Activated T-helper 1 cell treated with anti-CD3 and anti-CD28 coated beads, Interleukin-12 subunit alpha, Interleukin-12 subunit beta, Interleukin-2, Interleukin-4 antibody, amounts not matched to agents 30 ng/mL and 10 ng/mL and 1 ng/mL, durations not matched to agents 14 hours and 24 hours and 36 hours (primary cell): ENCODE measurements at regions of chrX and their contacts with region 1.

Region 1: GRCh38 chrX:120250522-120251271 is at the start of gene ZBTB33:
- DNase-seq: peak; percentile 79
- H3K4me3 Mint-ChIP-seq: peak within 1 kb of the TSS; percentile 96
- H3K27ac Mint-ChIP-seq: peak within 1 kb of the TSS; percentile 96
- H3K4me1 Mint-ChIP-seq: peaks cover 17% of the 10 kb centered on the region
- H3K27me3 Mint-ChIP-seq: no peaks in the 10 kb centered on the region
- total RNA-seq, gene ZBTB33: 13.0 and 13.4 TPM in 2 replicates

Region 2: DNA sequence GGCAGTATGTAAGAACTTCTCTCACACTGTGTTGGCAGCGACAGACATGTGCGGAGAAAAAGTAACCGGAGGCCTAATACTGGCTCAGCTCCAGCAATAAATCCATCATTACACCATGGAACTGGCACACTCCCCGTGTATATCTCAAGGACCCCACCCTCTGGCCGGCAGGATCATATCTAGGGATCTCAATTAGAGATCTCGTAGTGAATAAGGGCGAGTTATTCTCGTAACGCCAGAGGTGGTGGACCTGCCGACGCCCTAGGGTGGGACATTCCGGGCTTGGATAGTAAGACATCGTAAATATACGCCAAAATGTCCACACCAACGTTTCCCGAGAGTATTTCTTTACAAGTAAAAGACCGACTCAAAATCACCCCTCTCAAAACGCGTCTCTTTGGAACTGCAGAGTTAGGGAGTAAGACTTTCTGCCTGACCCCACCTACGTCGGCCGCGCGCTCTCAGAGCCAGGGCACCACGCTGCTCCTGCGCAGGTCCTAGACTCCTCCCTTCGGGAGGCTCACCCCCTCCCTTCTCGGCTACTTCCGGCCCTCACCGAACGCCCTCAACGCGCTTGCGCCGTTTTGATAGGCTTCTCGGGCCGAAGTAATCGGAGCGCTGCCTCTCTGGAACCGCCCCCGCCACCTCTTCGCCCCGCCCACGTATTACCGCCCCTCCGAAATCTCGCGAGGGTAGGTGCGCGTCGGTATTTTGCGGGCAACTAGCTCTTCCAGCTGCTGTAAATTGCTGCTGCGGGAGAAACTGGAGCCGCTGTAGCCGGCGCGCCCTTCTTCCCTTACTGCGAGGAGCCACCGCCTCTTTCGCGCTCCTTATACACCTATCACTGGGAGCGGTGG is 1905.1 kb before region 1 on chrX and contains the start of gene WDR44:
- intact Hi-C with region 1: loop called (anchors 5 kb)
- DNase-seq: peak; percentile 89
- H3K4me3 Mint-ChIP-seq: peak within 1 kb of the TSS; percentile 99
- H3K27ac Mint-ChIP-seq: peak within 1 kb of the TSS; percentile 99
- H3K4me1 Mint-ChIP-seq: peaks cover 39% of the 10 kb centered on the region
- H3K27me3 Mint-ChIP-seq: peaks cover 3% of the 10 kb centered on the region
- total RNA-seq, gene WDR44: 10.0 and 11.3 TPM in 2 replicates

Region 3: DNA sequence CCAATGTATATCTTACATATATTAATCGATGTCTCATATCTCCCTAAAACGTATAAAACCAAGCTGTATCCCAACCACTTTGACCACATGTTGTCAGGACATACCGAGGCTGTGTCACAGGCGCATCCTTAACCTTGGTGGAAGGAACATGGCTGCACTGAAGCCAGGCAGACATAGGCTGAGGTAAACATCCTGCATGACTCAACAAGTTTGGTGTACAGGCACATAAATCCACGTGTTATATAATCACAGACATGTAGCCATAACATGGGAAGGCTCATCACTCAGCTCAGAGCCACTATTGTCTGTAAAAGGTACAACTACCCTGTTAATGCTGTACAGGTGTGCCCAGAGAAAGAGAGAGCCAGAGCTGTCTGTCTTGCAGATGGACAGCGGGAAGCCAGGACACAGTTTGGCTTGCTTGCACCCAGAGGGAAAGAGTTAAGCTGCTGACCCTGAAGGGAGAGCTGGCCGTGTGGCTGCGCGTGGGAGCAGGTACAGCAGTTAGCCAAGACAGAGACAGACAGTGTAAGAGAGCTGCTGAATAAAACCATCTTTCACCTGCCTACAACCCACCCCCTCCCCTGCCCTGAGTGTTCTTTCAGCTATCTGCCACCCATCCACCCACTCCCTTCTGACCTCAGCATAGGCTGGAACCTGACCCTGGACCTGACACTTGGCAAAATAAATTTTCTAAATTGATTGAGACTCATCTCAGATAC is 22.3 kb before region 1 on chrX:
- intact Hi-C with region 1: no loop called
- DNase-seq: no peak
- H3K4me3 Mint-ChIP-seq: no peak overlapping the region
- H3K27ac Mint-ChIP-seq: no peak overlapping the region
- H3K4me1 Mint-ChIP-seq: peaks cover 6% of the 10 kb centered on the region
- H3K27me3 Mint-ChIP-seq: no peaks in the 10 kb centered on the region

Region 4: DNA sequence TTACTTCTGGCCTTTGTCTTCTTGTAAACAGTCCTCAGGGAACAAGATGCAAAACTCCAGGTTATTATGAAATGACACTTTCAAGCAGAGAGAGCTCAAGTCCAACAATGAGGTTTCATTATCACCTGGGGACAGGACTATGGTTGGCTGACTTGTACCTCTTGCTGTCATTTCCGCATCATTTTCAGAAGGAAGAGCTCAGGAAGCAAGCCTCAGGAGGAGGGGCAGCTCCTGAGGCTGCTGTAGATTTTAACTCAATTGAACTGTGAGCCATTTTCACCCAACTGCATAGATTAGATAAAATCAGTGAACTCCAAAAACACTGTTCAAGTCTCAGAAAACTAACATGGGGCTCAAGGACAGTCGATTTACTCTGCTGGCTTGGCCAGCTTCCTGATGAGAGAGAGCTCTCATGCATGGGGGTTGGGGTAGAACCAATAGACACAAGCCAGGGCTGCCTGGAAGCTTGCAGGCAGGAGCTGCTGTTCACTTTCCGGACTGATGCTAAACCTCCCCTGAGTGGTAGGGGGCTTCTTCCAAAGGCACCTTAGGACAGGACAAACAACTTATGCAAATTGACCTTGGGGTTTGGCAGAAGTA is 36.9 kb after region 1 on chrX:
- intact Hi-C with region 1: no loop called
- DNase-seq: no peak
- H3K4me3 Mint-ChIP-seq: no peak overlapping the region
- H3K27ac Mint-ChIP-seq: no peak overlapping the region
- H3K4me1 Mint-ChIP-seq: no peaks in the 10 kb centered on the region
- H3K27me3 Mint-ChIP-seq: peaks cover 4% of the 10 kb centered on the region

Region 5: DNA sequence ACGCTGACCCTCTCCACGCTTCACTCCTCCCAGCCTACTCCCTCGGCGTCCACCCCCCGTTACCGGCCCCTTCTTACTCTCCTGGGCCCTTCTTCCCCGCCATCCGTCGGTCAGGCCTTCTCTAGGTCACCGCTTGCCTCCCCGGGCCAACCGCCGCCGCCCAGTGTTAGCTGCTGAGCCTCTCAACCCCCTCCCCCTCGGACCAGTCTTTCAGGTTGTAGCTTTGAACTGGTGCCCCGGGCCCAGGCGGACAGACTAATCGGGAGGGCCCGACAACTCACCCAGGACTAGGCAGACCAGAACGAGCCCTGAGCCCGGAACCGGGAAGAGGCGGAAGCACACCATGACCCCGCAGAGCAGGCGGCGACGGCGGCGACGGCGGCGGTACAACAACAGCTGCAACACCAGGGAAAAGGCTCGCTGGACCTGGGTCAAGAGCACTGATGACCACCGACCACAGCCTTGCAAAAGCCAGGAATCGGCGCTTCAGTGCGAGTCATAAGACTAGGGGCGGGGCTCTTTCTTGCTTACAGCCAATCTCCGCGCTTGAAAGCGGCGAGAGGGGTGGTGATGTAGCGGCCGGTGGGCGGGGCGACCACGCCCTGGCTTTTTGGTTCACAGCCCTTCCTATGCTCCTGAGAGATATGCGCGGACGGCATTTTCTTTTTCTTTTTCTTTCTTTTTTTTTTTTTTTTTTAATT is 218.3 kb after region 1 on chrX and contains the start of gene LAMP2:
- intact Hi-C with region 1: loop called (anchors 1 kb)
- DNase-seq: peak; percentile 75
- H3K4me3 Mint-ChIP-seq: peak within 1 kb of the TSS; percentile 90
- H3K27ac Mint-ChIP-seq: peak within 1 kb of the TSS; percentile 89
- H3K4me1 Mint-ChIP-seq: peaks cover 11% of the 10 kb centered on the region
- H3K27me3 Mint-ChIP-seq: no peaks in the 10 kb centered on the region
- total RNA-seq, gene LAMP2: 42.7 and 44.1 TPM in 2 replicates

Region 6: GRCh38 chrX:120560842-120561633 is 310.3 kb after region 1 on chrX and contains the start of gene CUL4B:
- intact Hi-C with region 1: loop called (anchors 2 kb)
- DNase-seq: peak; percentile 89
- H3K4me3 Mint-ChIP-seq: peak within 1 kb of the TSS; percentile 99
- H3K27ac Mint-ChIP-seq: peak within 1 kb of the TSS; percentile 97
- H3K4me1 Mint-ChIP-seq: peaks cover 30% of the 10 kb centered on the region
- H3K27me3 Mint-ChIP-seq: no peaks in the 10 kb centered on the region
- total RNA-seq, gene CUL4B: 25.2 and 26.5 TPM in 2 replicates

Region 7: GRCh38 chrX:120755066-120755846 is 504.6 kb after region 1 on chrX:
- intact Hi-C with region 1: loop called (anchors 10 kb)
- DNase-seq: no peak
- H3K4me3 Mint-ChIP-seq: no peak overlapping the region
- H3K27ac Mint-ChIP-seq: peak overlapping the region; percentile 65
- H3K4me1 Mint-ChIP-seq: peaks cover 51% of the 10 kb centered on the region
- H3K27me3 Mint-ChIP-seq: no peaks in the 10 kb centered on the region